SK-N-SH (cell line): ENCODE measurements at regions of chr12 and their contacts with region 1.

Region 1: DNA sequence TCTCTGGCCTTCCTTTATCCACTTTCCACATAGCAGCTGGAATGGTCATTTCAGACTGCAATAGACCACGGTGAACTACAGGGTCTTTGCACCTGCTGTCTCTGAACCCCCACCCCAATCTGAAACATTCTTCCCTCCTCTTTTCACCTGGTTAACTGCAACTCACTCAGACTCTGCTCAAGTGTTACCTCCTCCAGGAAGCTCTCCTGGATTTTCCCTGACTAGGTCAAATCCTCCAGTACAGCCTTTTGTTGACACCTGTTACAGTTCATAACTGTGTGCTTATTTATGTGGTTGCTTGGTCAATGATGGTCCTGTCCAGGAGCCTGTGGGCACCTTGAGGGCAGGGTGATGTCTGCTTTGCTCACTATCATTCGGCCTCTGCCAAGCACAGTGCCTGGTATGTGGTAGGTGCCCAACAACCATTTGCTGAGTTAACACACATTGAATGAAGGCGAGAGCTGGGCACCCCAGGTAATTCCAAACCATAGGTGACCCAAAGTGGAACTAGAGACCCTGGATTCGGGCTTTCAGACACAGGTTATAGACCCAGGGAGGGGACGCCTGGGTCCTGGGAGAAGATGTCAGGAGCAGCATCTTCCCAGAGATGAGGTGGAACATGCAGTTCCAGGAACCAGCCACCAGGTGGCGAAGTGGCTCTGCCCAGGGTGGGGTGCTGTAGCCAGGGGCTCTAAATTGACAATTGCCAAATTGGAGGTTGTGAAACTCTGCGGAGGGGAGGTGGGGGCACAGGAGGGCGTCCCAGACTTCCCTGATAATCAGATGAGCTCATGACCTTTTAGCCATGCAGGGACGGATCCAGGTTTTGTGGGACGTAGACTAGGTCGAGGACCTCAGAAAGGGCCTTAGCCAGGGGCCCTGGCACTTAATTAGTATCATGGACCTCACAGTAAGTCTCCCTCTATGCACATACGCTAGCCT is 28.1 kb downstream of the TRPV4 start:
- DNase-seq: peak; percentile 89
- H3K4me3 ChIP-seq: no peak overlapping the region; a peak in 1 of 4 replicates
- H3K27ac ChIP-seq: no peak overlapping the region
- H3K4me1 ChIP-seq: no peaks in the 10 kb centered on the region
- H3K27me3 ChIP-seq: no peaks in the 10 kb centered on the region
- CTCF ChIP-seq: peak; percentile 93
- EP300 ChIP-seq: no peak
- RAD21 ChIP-seq: peak; percentile 77

Region 2: DNA sequence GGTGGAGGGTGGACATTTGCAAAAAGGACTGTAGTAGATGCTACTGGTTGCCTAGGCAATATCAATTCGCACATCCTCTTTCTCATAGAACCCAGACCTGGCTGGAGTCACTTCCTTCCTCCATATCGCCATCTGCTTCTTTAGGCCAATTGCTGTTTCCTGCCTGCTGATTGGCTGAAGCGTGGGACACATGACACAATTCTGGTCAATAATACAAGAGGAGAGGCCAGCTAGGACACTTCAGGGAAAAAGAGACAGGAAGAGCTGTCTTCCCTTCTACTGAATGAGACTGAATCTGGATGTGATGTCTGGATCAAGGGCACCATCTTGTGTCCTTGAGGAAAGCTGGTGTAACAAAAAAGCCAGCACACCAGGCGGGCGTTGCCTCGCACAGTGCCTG is 25.7 kb before region 1 on chr12:
- CTCF ChIA-PET with region 1: no interaction called
- POLR2A ChIA-PET with region 1: no interaction called
- DNase-seq: no peak
- H3K4me3 ChIP-seq: no peak overlapping the region
- H3K27ac ChIP-seq: no peak overlapping the region
- H3K4me1 ChIP-seq: peaks cover 0 to 3% of the 10 kb centered on the region in 2 experiments; a peak in 1 of 4 replicates
- H3K27me3 ChIP-seq: no peaks in the 10 kb centered on the region
- CTCF ChIP-seq: no peak
- EP300 ChIP-seq: no peak
- RAD21 ChIP-seq: peak; percentile 52

Region 3: DNA sequence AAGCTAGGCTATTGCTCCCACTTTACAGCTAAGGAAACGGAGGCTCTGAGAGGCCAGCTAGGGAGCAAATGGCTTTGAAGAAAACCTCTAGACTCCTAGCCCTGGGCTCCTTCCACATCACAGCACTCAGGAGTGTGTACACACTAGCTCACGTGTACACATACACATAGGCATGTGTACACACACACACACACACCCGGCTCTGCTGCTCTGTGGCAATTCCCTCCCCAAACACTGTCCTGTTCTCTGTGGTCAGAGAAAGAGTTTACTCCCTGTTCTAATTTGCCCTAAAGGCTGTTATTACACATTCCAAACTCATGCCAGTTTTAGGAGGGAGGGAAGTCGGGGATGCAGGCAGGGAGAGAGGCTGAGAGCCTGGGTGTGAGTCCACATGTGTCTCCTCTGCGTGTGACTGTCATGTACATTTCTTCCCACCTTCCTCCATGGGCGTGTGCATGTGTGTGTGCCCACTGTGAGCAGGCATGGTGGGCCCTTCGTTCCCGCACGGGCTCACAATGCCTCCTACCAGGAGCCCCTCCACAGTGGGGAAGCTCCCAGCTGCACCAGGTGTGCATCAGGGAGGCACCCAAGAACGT is 13.9 kb after region 1 on chr12:
- CTCF ChIA-PET with region 1: interaction called, 23 read pairs
- POLR2A ChIA-PET with region 1: no interaction called
- DNase-seq: no peak
- H3K4me3 ChIP-seq: no peak overlapping the region
- H3K27ac ChIP-seq: no peak overlapping the region
- H3K4me1 ChIP-seq: peaks cover 0 to 2% of the 10 kb centered on the region in 2 experiments; a peak in 1 of 4 replicates
- H3K27me3 ChIP-seq: no peaks in the 10 kb centered on the region
- CTCF ChIP-seq: no peak
- EP300 ChIP-seq: no peak
- RAD21 ChIP-seq: no peak

Region 4: DNA sequence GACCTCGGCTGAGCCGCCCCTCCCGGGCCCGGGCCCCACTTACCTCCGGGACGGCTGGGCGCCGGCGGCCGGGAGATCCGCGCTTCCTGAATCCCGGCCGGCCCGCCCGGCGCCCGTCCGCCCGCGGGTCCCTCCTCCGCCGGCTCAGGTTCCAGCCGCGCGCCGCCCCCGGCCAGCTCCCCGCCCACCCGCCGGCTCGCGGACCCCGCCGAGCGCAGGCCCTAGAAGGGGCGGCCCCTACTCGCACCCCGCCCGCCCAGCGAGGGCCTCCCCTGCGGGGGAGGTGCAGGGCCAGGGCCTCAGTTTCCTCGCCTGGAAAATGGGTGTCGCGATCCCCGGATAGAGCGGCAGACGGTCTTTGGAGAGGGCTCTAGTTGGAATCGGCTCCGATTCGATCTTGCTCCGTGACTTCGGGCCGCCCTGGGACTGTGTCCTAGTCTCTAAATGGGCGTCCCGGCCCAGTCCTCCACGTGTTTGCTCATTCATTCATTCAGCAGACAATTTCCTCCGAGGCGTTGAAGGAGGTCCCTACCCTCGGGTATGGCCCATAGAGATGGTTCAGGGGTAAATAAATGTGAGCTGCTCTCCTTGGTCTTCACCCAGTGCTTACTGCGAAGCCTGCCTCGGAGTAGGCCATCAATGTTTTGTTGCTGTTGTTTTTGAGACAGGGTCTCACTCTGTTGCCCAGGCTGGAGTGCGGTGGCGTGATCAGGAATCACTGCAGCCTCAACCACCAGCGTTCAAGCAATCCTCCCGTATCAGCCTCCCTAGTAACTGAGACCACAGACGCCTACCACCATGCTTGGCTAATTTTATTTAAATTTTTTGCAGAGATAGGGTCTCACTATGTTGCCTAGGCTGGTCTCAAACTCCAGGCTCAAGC is 28.5 kb after region 1 on chr12 and contains the start of gene TRPV4:
- CTCF ChIA-PET with region 1: interaction called, 32 read pairs
- POLR2A ChIA-PET with region 1: no interaction called
- DNase-seq: peak; percentile 87
- H3K4me3 ChIP-seq: peak within 1 kb of the TSS; percentile 55 to 66
- H3K27ac ChIP-seq: no peak within 1 kb of the TSS
- H3K4me1 ChIP-seq: no peaks in the 10 kb centered on the region; a peak in 1 of 4 replicates
- H3K27me3 ChIP-seq: no peaks in the 10 kb centered on the region
- CTCF ChIP-seq: no peak
- EP300 ChIP-seq: no peak
- RAD21 ChIP-seq: no peak
- polyA plus RNA-seq, gene TRPV4: 5.2 and 5.4 TPM in 2 replicates

Region 5: GRCh38 chr12:109858764-109859163 is 53.7 kb after region 1 on chr12:
- CTCF ChIA-PET with region 1: interaction called, 25 read pairs
- POLR2A ChIA-PET with region 1: no interaction called
- DNase-seq: no peak
- H3K4me3 ChIP-seq: no peak overlapping the region
- H3K27ac ChIP-seq: no peak overlapping the region
- H3K4me1 ChIP-seq: no peaks in the 10 kb centered on the region
- H3K27me3 ChIP-seq: no peaks in the 10 kb centered on the region
- CTCF ChIP-seq: no peak
- EP300 ChIP-seq: no peak
- RAD21 ChIP-seq: no peak